RWPE1 (cell line): ENCODE measurements at regions of chr3 and their contacts with region 1.

Region 1: GRCh38 chr3:195870442-195870841 is 37.9 kb downstream of the TNK2 start:
- DNase-seq: peak; percentile 80
- H3K27ac ChIP-seq: peak overlapping the region; percentile 56
- CTCF ChIP-seq: no peak

Region 2: GRCh38 chr3:195475614-195476013 is 394.8 kb before region 1 on chr3:
- CTCF ChIA-PET with region 1: no interaction called
- POLR2A ChIA-PET with region 1: no interaction called
- DNase-seq: no peak
- H3K27ac ChIP-seq: no peak overlapping the region
- CTCF ChIP-seq: no peak

Region 3: DNA sequence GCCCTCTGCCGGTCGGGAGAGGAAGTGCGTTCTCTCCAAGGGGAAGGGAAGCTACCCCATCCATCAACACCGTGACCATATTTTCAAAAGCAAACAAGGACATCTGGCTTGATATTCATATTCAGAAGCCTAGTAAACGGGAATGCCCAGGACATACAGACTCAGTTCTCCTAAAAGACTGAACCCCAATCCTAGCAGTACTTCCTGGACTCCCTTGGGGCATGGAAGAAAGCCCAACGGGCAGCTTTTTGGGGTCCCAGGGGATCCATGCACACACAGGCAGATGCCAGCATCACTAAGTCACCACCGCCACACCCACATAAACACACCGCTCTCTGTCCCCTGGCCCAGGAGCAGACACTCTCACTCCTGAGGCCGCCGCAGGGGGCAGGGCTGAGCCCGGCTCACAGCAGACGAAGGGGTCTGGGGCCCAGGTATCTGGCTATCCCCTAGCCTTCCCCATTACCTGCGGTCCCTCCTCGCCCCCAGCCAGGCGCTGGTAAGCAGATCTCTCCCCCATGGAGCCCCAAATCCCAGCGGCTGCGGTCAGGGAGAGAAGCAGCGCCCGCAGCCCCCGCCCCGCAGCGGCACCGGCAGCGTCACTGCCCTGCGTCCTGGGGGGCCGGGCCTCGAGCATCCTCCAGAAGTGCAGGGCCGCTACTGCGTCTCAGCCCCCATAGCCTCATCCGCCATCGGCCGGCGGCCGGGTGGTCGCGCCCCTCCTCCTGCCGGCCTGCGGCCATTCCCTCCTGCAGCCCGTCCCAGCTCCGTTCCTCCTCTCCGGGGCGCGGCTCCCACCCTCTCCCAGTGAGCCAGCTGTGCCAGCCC is 24.6 kb after region 1 on chr3:
- CTCF ChIA-PET with region 1: interaction called, 22 read pairs
- POLR2A ChIA-PET with region 1: no interaction called
- DNase-seq: peak; percentile 75
- H3K27ac ChIP-seq: peak overlapping the region; percentile 100
- CTCF ChIP-seq: peak; percentile 94

Region 4: DNA sequence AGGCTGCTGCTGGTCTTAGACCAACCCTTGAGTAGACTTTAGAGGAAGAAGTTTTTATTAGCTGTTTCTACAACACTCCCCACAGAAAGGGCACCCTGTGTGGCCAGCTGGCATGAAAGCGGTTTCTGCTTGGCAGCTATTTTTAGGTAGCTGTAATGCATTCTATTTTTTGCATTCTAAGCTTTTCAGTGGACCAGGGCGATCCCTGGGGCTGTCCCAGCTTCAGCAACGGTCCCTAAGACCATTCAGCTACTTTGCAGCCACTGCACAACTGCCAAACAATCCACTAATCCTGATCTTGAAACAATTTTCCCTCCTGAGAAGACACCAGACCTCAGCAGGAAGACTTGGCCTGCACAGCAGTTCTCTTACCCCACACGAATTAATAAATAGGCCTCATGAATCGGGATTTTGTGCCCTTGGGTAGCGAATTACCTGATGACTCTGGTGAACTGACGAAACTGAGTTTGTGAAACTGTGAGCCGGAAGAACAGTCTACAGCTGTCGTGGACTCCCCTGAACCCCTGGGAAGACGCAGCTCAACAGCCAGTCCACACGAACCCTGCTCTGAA is 226.0 kb after region 1 on chr3:
- CTCF ChIA-PET with region 1: no interaction called
- POLR2A ChIA-PET with region 1: no interaction called
- DNase-seq: no peak
- H3K27ac ChIP-seq: no peak overlapping the region
- CTCF ChIP-seq: no peak

Region 5: DNA sequence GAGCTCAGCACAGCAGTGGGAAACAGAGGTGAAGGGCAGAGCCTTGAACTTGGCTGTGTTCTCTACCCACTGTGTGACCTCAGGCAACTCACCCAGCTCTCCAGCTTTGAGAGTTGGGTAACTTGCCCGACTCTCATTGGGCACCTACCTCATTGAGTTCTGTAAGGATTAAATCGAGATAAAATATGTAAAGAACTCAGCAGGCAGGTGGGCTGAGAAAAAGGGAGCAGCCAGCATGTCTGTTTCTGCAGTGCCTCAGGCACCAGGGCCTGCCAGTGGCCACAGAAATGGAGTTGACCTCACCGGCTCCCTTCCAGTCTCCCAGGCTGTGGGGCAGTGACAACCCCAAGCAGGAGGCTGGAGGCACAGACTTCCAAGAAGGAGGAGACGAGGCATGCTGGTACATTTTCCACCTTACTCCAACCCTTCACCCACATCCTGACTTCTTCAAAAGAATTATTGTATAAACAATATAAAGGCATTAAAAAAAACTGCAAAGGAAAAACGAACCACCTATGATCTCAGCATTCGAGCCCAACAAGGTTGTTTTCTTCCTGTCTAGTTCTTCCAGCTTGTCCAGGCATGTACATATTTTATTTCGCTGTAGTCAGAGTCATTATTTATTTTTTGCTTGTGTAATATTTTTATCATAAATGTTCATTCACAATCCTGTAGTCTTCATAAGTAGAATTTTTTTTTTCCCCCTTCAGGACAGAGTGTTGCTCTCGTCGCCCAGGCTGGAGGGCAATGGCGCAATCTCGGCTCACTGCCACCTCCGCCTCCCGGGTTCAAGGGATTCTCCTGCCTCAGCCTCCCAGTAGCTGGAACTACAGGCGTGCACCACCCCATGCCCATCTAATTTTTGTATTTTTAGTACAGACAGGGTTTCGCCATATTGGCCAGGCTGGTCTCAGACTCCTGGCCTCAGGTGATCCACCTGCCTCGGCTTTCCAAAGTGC is 265.9 kb after region 1 on chr3:
- CTCF ChIA-PET with region 1: no interaction called
- POLR2A ChIA-PET with region 1: no interaction called
- DNase-seq: peak; percentile 86
- H3K27ac ChIP-seq: peak overlapping the region; percentile 97
- CTCF ChIP-seq: no peak